ENCODE measurements at regions of chr7 and their contacts with region 1.

Region 1: GRCh38 chr7:128209229-128210035 is 31.6 kb upstream of the LEP start:
- DNase-seq: peak; percentile 93
- H3K4me3 ChIP-seq: no peak overlapping the region
- H3K27ac ChIP-seq: no peak overlapping the region
- H3K4me1 ChIP-seq: peaks cover 0 to 3% of the 10 kb centered on the region in 2 experiments; a peak in 1 of 4 replicates
- H3K27me3 ChIP-seq: no peaks in the 10 kb centered on the region
- CTCF ChIP-seq: peak; percentile 99
- EP300 ChIP-seq: no peak
- RAD21 ChIP-seq: peak; percentile 100

Region 2: DNA sequence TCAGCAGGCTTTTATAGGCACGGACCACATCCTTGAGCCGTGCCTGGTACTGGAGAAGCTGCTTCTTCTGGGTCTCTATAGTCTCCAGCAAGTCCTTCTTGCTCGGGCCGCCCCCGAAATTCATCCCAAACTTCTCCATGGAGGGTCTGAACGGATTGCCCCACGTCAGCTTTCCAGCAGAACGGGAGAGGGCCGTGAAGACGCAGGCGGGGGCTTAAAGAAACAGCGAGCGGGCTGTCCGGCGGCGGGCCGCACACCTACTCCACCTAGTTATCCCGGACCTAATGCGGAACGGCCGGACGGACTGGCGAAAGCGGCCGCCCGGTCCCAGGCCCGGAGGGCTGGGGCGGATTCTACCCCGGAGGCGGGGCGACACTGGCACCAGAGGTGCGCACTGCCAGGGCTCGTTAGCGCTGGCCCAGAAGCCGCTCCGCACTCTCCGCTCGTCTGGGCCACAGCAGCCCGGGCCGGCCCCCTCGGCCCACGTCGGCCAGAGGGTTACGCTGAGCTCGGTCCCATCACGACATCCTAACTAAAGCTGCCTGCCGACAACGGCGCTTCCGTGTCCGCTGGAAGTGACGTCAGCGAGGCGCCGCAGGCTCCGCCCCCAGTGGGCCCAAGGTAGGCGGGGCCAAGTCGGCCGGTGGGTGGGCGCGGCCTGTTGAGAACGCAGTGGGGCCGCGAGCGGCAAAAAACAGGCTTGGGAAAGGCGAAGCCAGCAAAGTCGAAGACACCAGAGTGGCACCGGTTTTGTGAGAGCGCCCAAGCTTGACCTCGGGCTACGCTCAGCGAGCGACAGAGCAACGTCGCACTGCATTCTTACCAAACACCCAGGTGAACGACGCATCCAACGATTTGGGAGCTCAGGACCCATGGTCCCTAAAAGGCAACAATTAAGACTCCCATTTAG is 624.1 kb before region 1 on chr7 and contains the start of gene GCC1:
- CTCF ChIA-PET with region 1: interaction called, 78 read pairs
- POLR2A ChIA-PET with region 1: interaction called, 3 read pairs
- DNase-seq: peak; percentile 99
- H3K4me3 ChIP-seq: peak within 1 kb of the TSS; percentile 95 to 100
- H3K27ac ChIP-seq: peak within 1 kb of the TSS; percentile 67 to 77
- H3K4me1 ChIP-seq: peaks cover 10 to 59% of the 10 kb centered on the region in 2 experiments; a peak in 3 of 4 replicates
- H3K27me3 ChIP-seq: no peaks in the 10 kb centered on the region
- CTCF ChIP-seq: no peak
- EP300 ChIP-seq: peak in 1 of 2 experiments; percentile 20; a peak in 1 of 4 replicates
- RAD21 ChIP-seq: no peak
- polyA plus RNA-seq, gene GCC1: 8.4 and 10.3 TPM in 2 replicates

Region 3: DNA sequence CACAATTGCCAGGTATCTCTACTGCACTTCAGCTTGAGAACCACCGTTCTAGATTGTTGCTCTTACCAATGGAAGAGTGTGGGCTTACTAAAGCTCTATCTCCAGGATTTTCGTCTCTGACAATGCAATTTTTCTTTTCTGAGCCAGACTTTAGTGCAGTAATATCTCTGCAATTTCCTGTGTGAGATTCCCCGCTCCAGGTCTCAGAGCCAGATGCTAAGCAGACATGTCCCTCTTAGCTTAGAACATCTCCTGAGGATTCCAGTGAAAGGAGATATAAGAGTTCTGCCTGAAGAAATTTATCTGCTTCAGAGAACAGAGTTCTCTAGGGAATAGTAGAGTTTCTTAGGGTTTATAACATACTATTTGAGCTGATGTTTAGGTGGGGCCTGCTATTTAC is 475.4 kb before region 1 on chr7:
- CTCF ChIA-PET with region 1: interaction called, 18 read pairs
- POLR2A ChIA-PET with region 1: no interaction called
- DNase-seq: no peak
- H3K4me3 ChIP-seq: no peak overlapping the region
- H3K27ac ChIP-seq: peak overlapping the region in 1 of 2 experiments; percentile 76; a peak in 2 of 4 replicates
- H3K4me1 ChIP-seq: peaks cover 5 to 37% of the 10 kb centered on the region in 2 experiments; a peak in 3 of 4 replicates
- H3K27me3 ChIP-seq: no peaks in the 10 kb centered on the region
- CTCF ChIP-seq: no peak
- EP300 ChIP-seq: no peak
- RAD21 ChIP-seq: no peak

Region 4: GRCh38 chr7:128031901-128032604 is 177.4 kb before region 1 on chr7:
- CTCF ChIA-PET with region 1: interaction called, 165 read pairs
- POLR2A ChIA-PET with region 1: interaction called, 3 read pairs
- DNase-seq: peak; percentile 92
- H3K4me3 ChIP-seq: peak overlapping the region; percentile 55 to 62
- H3K27ac ChIP-seq: peak overlapping the region in 1 of 2 experiments; percentile 51; a peak in 2 of 4 replicates
- H3K4me1 ChIP-seq: peaks cover 0 to 19% of the 10 kb centered on the region in 2 experiments; a peak in 2 of 4 replicates
- H3K27me3 ChIP-seq: no peaks in the 10 kb centered on the region
- CTCF ChIP-seq: peak; percentile 44
- EP300 ChIP-seq: peak in 1 of 2 experiments; percentile 11; a peak in 1 of 4 replicates
- RAD21 ChIP-seq: peak; percentile 43

Region 5: DNA sequence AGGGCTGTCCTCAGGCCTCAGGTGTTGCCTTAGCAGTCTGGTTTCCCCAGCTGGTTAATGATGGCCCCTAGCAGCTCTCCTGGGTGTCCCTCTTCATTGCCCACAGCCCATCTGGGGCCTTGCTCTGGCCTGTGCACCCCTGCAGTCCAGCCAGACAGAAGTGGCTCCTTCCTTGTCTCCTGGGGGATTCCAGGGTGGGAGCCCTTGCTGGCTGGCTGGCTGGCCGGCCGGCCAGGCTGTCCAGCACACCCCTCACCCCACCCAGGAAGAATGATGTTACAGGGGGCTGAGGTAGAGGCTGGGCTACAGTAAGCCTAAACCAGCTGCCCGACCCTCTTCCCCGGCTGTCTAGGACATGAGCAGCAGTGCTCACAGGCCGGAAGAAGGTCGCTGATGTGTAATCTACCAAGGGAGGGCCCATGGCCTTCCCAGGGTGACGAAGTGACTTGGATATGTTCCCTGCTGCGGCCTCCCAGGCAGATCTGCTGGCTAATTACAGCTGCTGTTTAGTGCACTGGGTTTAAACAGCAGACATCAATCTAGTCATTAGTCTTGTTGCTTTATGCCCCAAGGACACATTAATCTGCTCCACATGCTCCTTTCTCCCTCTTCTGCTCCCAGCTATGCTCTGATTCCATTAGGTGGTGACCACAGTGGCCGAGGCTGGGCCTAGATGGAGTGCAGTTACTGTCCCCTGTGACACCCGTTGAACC is 124.4 kb before region 1 on chr7:
- CTCF ChIA-PET with region 1: interaction called, 37 read pairs
- POLR2A ChIA-PET with region 1: no interaction called
- DNase-seq: peak; percentile 96
- H3K4me3 ChIP-seq: no peak overlapping the region
- H3K27ac ChIP-seq: peak overlapping the region; percentile 51 to 99; a peak in 3 of 4 replicates
- H3K4me1 ChIP-seq: peaks cover 0 to 63% of the 10 kb centered on the region in 2 experiments; a peak in 2 of 4 replicates
- H3K27me3 ChIP-seq: no peaks in the 10 kb centered on the region
- CTCF ChIP-seq: no peak
- EP300 ChIP-seq: peak in 1 of 2 experiments; percentile 99; a peak in 2 of 4 replicates
- RAD21 ChIP-seq: 0 out of 2 replicates have a peak, but pooled peaks have one; percentile 18

Region 6: GRCh38 chr7:128135515-128136214 is 73.8 kb before region 1 on chr7:
- CTCF ChIA-PET with region 1: interaction called, 162 read pairs
- POLR2A ChIA-PET with region 1: no interaction called
- DNase-seq: peak; percentile 98
- H3K4me3 ChIP-seq: peak overlapping the region; percentile 60 to 77
- H3K27ac ChIP-seq: no peak overlapping the region; a peak in 1 of 4 replicates
- H3K4me1 ChIP-seq: peaks cover 4 to 10% of the 10 kb centered on the region in 2 experiments; a peak in 2 of 4 replicates
- H3K27me3 ChIP-seq: 0 out of 2 replicates have a peak, but pooled peaks cover 9% of the 10 kb centered on the region
- CTCF ChIP-seq: peak; percentile 85
- EP300 ChIP-seq: peak in 1 of 2 experiments; percentile 74; a peak in 1 of 4 replicates
- RAD21 ChIP-seq: peak; percentile 60

Region 7: GRCh38 chr7:128221929-128222403 is 12.5 kb after region 1 on chr7:
- CTCF ChIA-PET with region 1: interaction called, 108 read pairs
- POLR2A ChIA-PET with region 1: no interaction called
- DNase-seq: peak; percentile 69
- H3K4me3 ChIP-seq: no peak overlapping the region
- H3K27ac ChIP-seq: peak overlapping the region in 1 of 2 experiments; percentile 35; a peak in 2 of 4 replicates
- H3K4me1 ChIP-seq: peaks cover 3 to 19% of the 10 kb centered on the region in 2 experiments; a peak in 2 of 4 replicates
- H3K27me3 ChIP-seq: no peaks in the 10 kb centered on the region
- CTCF ChIP-seq: no peak
- EP300 ChIP-seq: peak; percentile 41 to 72; a peak in 2 of 4 replicates
- RAD21 ChIP-seq: no peak

Region 8: GRCh38 chr7:128343554-128344430 is 134.4 kb after region 1 on chr7 and contains the start of gene RBM28:
- CTCF ChIA-PET with region 1: no interaction called
- POLR2A ChIA-PET with region 1: no interaction called
- DNase-seq: peak; percentile 94
- H3K4me3 ChIP-seq: peak within 1 kb of the TSS; percentile 60 to 80
- H3K27ac ChIP-seq: peak within 1 kb of the TSS; percentile 73 to 86
- H3K4me1 ChIP-seq: peaks cover 0 to 28% of the 10 kb centered on the region in 2 experiments; a peak in 2 of 4 replicates
- H3K27me3 ChIP-seq: no peaks in the 10 kb centered on the region
- CTCF ChIP-seq: no peak
- EP300 ChIP-seq: peak in 1 of 2 experiments; percentile 70; a peak in 1 of 4 replicates
- RAD21 ChIP-seq: peak; percentile 31; the same call in 1 of the 2 replicates
- polyA plus RNA-seq, gene RBM28: 29.1 and 33.0 TPM in 2 replicates